Activated CD8-positive, alpha-beta T cell treated with anti-CD3 and anti-CD28 coated beads for 36 hours (primary cell): ENCODE measurements at regions of chr5 and their contacts with region 1.

Region 1: DNA sequence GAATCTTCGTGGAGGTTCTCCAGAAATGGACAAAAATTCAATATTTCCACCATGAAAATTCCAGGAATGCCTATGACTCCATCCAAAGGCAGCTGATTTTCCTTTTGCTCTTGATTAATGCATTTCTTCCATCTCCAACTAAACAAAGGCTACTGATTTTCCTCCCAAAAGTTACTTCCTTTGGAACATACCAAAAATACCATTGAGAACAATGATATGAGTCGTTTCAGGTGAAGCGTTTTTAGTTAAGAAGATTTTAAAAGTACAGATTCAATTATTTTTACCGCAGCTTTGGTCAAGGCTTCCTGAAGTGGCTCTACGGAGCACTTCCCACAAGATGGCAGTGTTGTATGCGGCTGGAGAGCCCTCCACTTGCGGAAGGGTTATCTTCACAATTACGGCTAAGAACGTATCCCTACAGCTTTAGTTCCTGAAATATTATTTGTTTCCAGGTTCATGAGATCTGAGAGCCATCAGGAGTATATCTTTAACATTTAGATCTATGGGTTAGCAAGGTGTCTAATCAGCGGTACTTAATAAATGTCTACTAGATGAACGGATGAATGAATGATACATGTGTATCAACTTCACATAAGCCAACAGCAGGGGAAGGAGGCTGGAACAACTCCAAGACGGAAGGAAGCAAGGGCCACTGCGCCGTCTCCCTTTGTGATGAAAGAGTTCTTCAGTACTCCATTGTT is 35.9 kb upstream of the ARSB start:
- DNase-seq: peak; percentile 66
- ATAC-seq: peak; percentile 51
- H3K4me3 Mint-ChIP-seq: no peak overlapping the region
- H3K27ac Mint-ChIP-seq: no peak overlapping the region
- H3K4me1 Mint-ChIP-seq: peaks cover 5% of the 10 kb centered on the region
- H3K27me3 Mint-ChIP-seq: peaks cover 41% of the 10 kb centered on the region
- CTCF ChIP-seq: peak; percentile 68

Region 2: GRCh38 chr5:78610163-78610583 is 410.8 kb before region 1 on chr5:
- CTCF ChIA-PET with region 1: no interaction called
- POLR2A ChIA-PET with region 1: no interaction called
- intact Hi-C with region 1: no loop called
- DNase-seq: no peak
- ATAC-seq: no peak
- H3K4me3 Mint-ChIP-seq: no peak overlapping the region
- H3K27ac Mint-ChIP-seq: no peak overlapping the region
- H3K4me1 Mint-ChIP-seq: no peaks in the 10 kb centered on the region
- H3K27me3 Mint-ChIP-seq: peaks cover 4% of the 10 kb centered on the region
- CTCF ChIP-seq: no peak

Region 3: GRCh38 chr5:78886341-78887230 is 134.4 kb before region 1 on chr5:
- CTCF ChIA-PET with region 1: interaction called, 10 read pairs
- POLR2A ChIA-PET with region 1: no interaction called
- intact Hi-C with region 1: no loop called
- DNase-seq: no peak
- ATAC-seq: no peak
- H3K4me3 Mint-ChIP-seq: no peak overlapping the region
- H3K27ac Mint-ChIP-seq: no peak overlapping the region
- H3K4me1 Mint-ChIP-seq: peaks cover 20% of the 10 kb centered on the region
- H3K27me3 Mint-ChIP-seq: no peaks in the 10 kb centered on the region
- CTCF ChIP-seq: peak; percentile 78

Region 4: DNA sequence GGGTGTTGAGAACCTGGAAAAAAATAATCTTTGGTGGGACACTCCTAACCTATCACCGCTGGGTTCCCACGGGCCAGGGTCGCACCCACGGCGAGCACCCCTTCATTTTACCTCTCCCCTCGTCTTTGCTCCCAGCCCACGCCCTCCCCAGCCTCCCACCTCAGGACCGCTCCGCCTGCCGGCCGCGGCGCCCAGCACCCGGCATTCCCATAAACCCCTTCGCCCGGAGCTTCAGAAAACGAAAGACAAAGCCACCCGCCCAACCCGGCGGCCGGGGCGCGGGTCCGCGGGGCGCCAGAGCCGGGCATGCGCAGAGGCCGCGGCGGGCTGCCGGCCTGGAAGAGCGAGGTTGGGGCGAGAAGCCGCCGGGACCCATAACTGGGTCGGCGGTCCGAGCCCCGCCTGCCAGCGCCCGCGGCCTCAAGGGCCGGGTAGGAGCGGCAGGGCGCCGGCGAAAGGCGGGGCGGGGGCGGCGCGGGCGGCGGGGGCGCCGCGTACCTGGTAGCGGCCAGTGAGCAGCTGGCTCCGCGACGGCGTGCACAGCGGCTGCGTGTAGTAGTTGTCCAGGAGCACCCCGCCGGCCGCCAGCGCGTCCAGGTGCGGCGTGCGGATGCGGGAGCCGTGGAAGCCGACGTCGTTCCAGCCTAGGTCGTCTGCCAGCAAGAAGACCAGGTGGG is 36.4 kb before region 1 on chr5:
- CTCF ChIA-PET with region 1: interaction called, 57 read pairs
- POLR2A ChIA-PET with region 1: interaction called, 4 read pairs
- intact Hi-C with region 1: no loop called
- DNase-seq: peak; percentile 79
- ATAC-seq: peak; percentile 52
- H3K4me3 Mint-ChIP-seq: peak overlapping the region; percentile 85
- H3K27ac Mint-ChIP-seq: peak overlapping the region; percentile 92
- H3K4me1 Mint-ChIP-seq: peaks cover 45% of the 10 kb centered on the region
- H3K27me3 Mint-ChIP-seq: no peaks in the 10 kb centered on the region
- CTCF ChIP-seq: no peak

Region 5: DNA sequence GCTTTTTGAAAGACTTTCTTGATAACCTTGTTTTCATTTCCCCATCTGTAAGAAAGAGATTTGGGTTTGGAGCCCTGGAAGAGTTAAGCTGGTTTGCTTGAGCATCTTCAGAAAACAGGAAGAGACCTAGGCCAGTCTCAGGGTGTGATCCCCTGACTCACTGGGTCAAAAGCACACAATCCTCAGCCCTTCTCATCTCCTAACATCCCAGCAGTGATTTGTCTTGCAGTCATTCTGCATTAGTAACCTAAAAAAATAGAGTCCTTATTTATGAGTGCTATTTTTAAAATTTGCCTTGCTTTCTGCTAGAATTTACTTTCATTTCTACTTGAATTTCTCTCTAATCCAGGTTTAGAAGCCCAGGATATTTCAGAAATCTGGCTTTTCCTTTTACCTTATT is 19.5 kb before region 1 on chr5:
- CTCF ChIA-PET with region 1: interaction called, 22 read pairs
- POLR2A ChIA-PET with region 1: no interaction called
- intact Hi-C with region 1: no loop called
- DNase-seq: no peak
- ATAC-seq: no peak
- H3K4me3 Mint-ChIP-seq: no peak overlapping the region
- H3K27ac Mint-ChIP-seq: no peak overlapping the region
- H3K4me1 Mint-ChIP-seq: no peaks in the 10 kb centered on the region
- H3K27me3 Mint-ChIP-seq: peaks cover 16% of the 10 kb centered on the region
- CTCF ChIP-seq: no peak

Region 6: GRCh38 chr5:79048437-79048836 is 27.4 kb after region 1 on chr5:
- CTCF ChIA-PET with region 1: interaction called, 53 read pairs
- POLR2A ChIA-PET with region 1: no interaction called
- intact Hi-C with region 1: no loop called
- DNase-seq: no peak
- ATAC-seq: no peak
- H3K4me3 Mint-ChIP-seq: no peak overlapping the region
- H3K27ac Mint-ChIP-seq: no peak overlapping the region
- H3K4me1 Mint-ChIP-seq: no peaks in the 10 kb centered on the region
- H3K27me3 Mint-ChIP-seq: no peaks in the 10 kb centered on the region
- CTCF ChIP-seq: no peak

Region 7: GRCh38 chr5:79109527-79110492 is 88.8 kb after region 1 on chr5:
- CTCF ChIA-PET with region 1: interaction called, 100 read pairs
- POLR2A ChIA-PET with region 1: no interaction called
- intact Hi-C with region 1: loop called (anchors 5 kb)
- DNase-seq: peak; percentile 68
- ATAC-seq: peak; percentile 75
- H3K4me3 Mint-ChIP-seq: no peak overlapping the region
- H3K27ac Mint-ChIP-seq: no peak overlapping the region
- H3K4me1 Mint-ChIP-seq: no peaks in the 10 kb centered on the region
- H3K27me3 Mint-ChIP-seq: peaks cover 36% of the 10 kb centered on the region
- CTCF ChIP-seq: peak; percentile 85

Region 8: GRCh38 chr5:79464695-79465332 is 443.8 kb after region 1 on chr5:
- CTCF ChIA-PET with region 1: interaction called, 17 read pairs
- POLR2A ChIA-PET with region 1: no interaction called
- intact Hi-C with region 1: loop called (anchors 10 kb)
- DNase-seq: no peak
- ATAC-seq: no peak
- H3K4me3 Mint-ChIP-seq: no peak overlapping the region
- H3K27ac Mint-ChIP-seq: no peak overlapping the region
- H3K4me1 Mint-ChIP-seq: no peaks in the 10 kb centered on the region
- H3K27me3 Mint-ChIP-seq: peaks cover 1% of the 10 kb centered on the region
- CTCF ChIP-seq: peak; percentile 66